HEK293T (cell line): ENCODE measurements at regions of chr14 and their contacts with region 1.

Region 1: DNA sequence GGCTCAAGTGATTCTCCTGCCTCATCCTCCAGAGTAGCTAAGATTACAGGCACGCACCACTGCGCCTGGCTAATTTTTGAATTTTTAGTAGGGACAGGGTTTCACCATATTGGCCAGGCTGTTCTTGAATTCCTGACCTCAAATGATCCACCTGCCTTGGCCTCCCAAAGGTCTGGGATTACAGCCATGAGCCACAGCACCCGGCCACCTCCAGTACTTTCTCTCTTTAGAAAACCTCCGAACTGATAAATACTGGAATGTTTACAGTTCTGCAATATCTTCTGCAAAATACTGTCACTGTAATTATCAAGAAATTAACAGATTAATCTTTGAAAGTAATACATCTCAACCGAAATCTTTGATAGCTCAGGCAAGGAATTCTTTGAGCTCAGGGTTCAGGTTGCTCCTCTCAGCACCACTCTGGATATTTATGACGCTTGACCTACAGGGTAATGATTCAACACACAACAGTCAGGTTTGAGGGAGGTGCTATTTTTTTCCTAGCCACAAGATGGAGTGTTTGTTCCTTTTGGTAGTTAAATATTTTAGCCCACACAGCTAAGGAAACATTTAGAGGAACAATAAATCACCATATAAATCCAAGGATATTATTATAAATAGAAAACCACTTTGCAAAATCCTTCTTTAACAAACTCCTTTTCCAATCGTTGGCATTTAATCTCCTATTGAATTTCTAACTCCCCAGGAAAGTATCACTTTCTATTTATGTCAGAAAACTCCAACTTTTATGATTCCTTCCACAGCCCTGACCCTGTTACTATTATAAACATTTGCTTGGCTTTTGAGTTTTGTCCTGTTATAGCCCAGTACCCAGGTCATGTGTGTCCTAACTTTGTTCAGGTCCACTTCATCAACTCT is 48.6 kb upstream of the GTF2A1 start:
- DNase-seq: peak; percentile 68

Region 2: DNA sequence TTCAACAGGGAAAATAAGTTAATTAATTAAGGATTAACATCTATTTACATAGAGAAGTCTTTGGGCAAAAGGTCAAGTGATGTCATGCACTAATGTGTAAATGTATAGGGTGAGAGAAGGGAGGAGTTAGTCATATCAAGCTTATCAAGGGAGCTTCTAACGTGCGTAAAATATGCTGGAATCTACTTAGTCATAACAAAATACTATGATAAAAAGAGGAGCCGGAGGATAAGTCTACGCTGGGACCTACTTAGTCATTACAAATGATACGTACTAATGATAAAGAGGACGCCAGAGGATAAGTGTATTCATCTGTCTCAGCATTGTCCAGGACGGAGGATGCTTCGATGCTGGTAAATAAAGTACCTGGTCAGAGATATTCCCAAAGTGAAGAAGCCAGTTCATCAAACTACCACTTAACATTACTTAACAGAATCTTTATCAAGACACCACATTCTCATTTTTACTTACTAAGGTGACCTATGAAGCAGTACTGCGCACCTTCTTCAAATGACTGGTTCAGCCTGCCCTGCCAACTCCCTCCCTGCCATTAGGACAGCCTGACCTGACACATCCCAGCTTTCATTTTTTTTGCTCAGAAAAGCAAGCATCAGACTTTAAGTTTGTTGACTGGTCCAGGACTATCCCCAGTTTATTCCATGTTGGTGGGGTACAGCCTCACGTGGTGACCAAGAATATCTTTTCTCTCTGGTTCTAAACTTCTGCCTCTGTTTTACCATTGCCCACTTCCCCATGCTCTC is 17.9 kb after region 1 on chr14:
- CTCF ChIA-PET with region 1: no interaction called
- POLR2A ChIA-PET with region 1: no interaction called
- DNase-seq: no peak

Region 3: GRCh38 chr14:81453166-81453766 is 183.9 kb after region 1 on chr14:
- CTCF ChIA-PET with region 1: interaction called, 31 read pairs
- POLR2A ChIA-PET with region 1: interaction called, 3 read pairs
- DNase-seq: peak; percentile 46

Region 4: DNA sequence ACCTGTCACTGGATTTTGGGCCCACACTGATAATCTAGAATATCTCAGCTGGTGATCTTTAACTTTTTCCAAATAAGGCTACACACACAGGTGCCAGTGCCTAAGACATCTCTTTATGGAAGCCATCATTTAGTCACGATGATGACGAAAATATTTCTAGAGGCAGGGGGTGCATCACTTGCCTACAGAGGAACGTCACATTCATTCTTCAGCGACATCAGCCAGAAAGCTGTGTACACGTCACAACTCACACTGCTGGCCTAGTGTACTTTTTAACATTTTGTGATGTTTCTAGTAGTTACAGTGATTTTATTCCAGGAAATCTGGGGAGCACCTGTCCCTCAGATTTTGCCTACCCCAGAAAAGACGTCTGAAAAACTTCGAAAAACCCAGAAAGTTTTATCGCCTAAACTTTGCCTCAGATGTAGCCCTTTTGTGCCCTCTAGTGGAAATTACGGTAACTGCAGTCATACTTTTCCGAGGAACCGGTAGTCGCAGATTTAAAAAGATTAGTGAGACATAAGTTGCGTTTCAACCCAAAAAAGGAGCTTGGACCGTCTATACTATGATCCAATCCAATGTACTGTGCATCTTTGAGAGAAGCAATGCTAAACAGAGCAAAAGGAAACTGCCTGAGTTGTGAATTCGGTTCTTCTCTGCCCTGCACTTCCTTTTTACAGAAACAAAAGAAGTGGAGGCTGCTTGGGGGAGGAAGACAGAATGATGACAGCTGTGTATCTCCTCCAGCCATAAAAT is 195.1 kb after region 1 on chr14:
- CTCF ChIA-PET with region 1: interaction called, 12 read pairs
- POLR2A ChIA-PET with region 1: no interaction called
- DNase-seq: peak; percentile 51

Region 5: GRCh38 chr14:81509822-81510451 is 240.6 kb after region 1 on chr14:
- CTCF ChIA-PET with region 1: interaction called, 11 read pairs
- POLR2A ChIA-PET with region 1: no interaction called
- DNase-seq: peak; percentile 33